ENCODE measurements at regions of chr3 and their contacts with region 1.

Region 1: GRCh38 chr3:192675958-192676649 is 51.2 kb downstream of the FGF12 start:
- DNase-seq: no peak
- H3K4me3 ChIP-seq: no peak overlapping the region
- H3K27ac ChIP-seq: no peak overlapping the region
- H3K4me1 ChIP-seq: no peaks in the 10 kb centered on the region
- H3K27me3 ChIP-seq: no peaks in the 10 kb centered on the region
- CTCF ChIP-seq: no peak

Region 2: GRCh38 chr3:192636517-192637444 is 39.3 kb before region 1 on chr3:
- CTCF ChIA-PET with region 1: no interaction called
- POLR2A ChIA-PET with region 1: no interaction called
- intact Hi-C with region 1: loop called (anchors 1 kb)
- DNase-seq: peak; percentile 17 to 51
- H3K4me3 ChIP-seq: no peak overlapping the region
- H3K27ac ChIP-seq: no peak overlapping the region
- H3K4me1 ChIP-seq: no peaks in the 10 kb centered on the region
- H3K27me3 ChIP-seq: no peaks in the 10 kb centered on the region
- CTCF ChIP-seq: no peak

Region 3: GRCh38 chr3:192745130-192745529 is 69.0 kb after region 1 on chr3:
- CTCF ChIA-PET with region 1: no interaction called
- POLR2A ChIA-PET with region 1: no interaction called
- intact Hi-C with region 1: no loop called
- DNase-seq: peak; percentile 22 to 33
- H3K4me3 ChIP-seq: peak overlapping the region; percentile 56
- H3K27ac ChIP-seq: no peak overlapping the region
- H3K4me1 ChIP-seq: peaks cover 5% of the 10 kb centered on the region; the same call in 1 of the 2 replicates
- H3K27me3 ChIP-seq: no peaks in the 10 kb centered on the region
- CTCF ChIP-seq: no peak

Region 4: DNA sequence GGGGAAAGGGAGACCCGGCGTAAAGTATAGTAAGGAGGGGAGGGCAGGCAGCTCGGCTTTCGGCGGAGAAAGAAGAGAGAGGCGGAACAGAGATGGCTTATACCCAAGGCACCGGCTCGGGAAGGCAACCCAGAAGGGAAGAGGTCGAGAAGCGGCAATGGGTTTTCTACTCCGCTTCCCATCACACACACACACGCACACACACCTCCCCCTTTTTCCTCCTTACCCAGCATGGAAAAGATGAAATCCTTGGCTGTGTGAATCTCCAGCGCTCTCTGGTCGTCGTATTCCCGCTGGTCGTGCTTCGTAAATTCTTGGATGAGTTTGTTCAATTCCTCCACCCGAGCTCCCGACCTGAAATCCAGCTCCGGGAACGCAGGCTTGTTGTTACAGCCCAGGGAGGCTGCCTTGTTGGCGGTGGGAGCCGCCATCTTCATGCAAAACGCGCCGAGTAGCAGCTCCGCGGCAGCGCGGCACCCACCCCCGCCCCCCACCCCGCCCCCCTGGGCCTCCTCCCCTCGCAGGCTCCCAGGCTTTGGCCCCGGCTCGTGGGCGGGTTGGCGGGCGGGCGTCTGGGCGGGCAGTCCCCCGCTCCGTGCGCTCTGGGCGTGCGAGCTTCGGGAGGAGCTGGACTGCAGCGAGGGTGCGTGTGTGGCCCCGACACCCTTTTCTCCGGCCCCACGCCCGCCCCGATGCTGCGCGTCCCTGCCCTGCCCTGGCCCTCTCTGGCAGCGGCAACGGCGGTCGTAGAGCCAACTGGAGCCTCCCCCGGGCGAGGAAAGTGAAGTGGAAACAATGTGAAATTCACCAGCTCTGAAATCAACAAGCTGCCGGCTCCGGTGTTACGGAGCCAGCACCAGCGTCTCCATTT is 241.5 kb after region 1 on chr3 and contains the start of gene MB21D2:
- CTCF ChIA-PET with region 1: no interaction called
- POLR2A ChIA-PET with region 1: no interaction called
- intact Hi-C with region 1: no loop called
- DNase-seq: peak; percentile 78 to 86
- H3K4me3 ChIP-seq: peak within 1 kb of the TSS; percentile 79
- H3K27ac ChIP-seq: peak within 1 kb of the TSS; percentile 79
- H3K4me1 ChIP-seq: peaks cover 29% of the 10 kb centered on the region
- H3K27me3 ChIP-seq: no peaks in the 10 kb centered on the region
- CTCF ChIP-seq: no peak
- total RNA-seq, gene MB21D2: 4.5 and 5.1 TPM in 2 replicates